CD8-positive, alpha-beta memory T cell (primary cell): ENCODE measurements at regions of chr11 and their contacts with region 1.

Region 1: GRCh38 chr11:10857709-10858438 is at the start of gene ZBED5:
- DNase-seq: peak; percentile 90 to 97 (median 96)
- H3K4me3 ChIP-seq: peak within 1 kb of the TSS; percentile 75
- H3K4me3 Mint-ChIP-seq: peak within 1 kb of the TSS; percentile 95 to 100 (median 99)
- H3K27ac ChIP-seq: peak within 1 kb of the TSS; percentile 89
- H3K27ac Mint-ChIP-seq: peak within 1 kb of the TSS; percentile 96 to 100 (median 99)
- H3K4me1 ChIP-seq: peaks cover 27% of the 10 kb centered on the region
- H3K4me1 Mint-ChIP-seq: peaks cover 31 to 58% (median 56%) of the 10 kb centered on the region in 3 donors
- H3K27me3 ChIP-seq: no peaks in the 10 kb centered on the region
- H3K27me3 Mint-ChIP-seq: no peaks in the 10 kb centered on the region
- total RNA-seq, gene ZBED5: 45.7 to 51.9 TPM

Region 2: GRCh38 chr11:10824888-10825287 is 33.0 kb before region 1 on chr11:
- CTCF ChIA-PET with region 1: no interaction called
- POLR2A ChIA-PET with region 1: no interaction called
- DNase-seq: no peak
- H3K4me3 ChIP-seq: no peak overlapping the region
- H3K4me3 Mint-ChIP-seq: no peak overlapping the region
- H3K27ac ChIP-seq: no peak overlapping the region
- H3K27ac Mint-ChIP-seq: peak overlapping the region in 2 of 8 donors; percentile 12 to 85
- H3K4me1 ChIP-seq: no peaks in the 10 kb centered on the region
- H3K4me1 Mint-ChIP-seq: peaks cover 0 to 4% (median 4%) of the 10 kb centered on the region in 3 donors
- H3K27me3 ChIP-seq: no peaks in the 10 kb centered on the region
- H3K27me3 Mint-ChIP-seq: peaks cover 0 to 2% of the 10 kb centered on the region in 2 donors

Region 3: DNA sequence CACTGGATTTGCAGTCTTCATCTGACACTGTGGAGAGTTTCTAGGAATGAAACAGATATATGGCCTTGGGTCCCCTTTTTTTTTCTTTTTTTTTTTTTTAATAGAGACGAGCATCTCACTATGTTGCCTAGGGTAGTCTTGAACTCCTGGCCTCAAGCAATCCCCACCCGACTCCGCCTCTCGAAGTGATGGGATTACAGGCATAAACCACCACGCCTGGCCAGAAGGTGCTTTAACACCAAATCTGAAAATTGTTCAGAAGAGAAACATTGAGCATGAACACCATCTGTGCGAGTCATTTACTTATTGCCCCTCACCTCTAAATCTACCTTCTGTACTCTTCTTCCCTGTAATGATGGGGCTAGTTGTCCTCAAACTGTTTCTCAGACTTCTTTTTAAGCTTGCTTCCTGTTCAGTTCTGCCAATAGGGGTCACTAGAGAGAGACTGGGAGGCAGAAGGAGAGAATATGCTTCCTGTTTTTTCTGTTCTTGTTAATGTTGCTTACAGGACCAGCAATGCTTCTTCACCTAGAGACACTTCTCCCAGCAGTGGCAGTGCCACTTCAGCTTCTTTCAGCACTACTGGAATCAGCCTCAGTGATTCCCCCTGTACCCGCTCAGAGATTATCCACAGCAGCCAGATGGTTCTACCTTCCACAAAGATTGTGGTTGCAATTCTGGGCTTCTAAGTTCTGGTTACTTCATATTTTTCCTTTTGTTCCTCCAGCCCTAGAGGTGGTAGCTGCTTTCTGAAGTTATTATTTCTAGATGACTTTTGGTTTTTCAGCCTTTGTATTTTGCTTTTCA is 20.7 kb after region 1 on chr11:
- CTCF ChIA-PET with region 1: interaction called, 11 read pairs
- POLR2A ChIA-PET with region 1: interaction called, 6 read pairs
- DNase-seq: peak in 2 of 5 donors; percentile 53 to 62
- H3K4me3 ChIP-seq: no peak overlapping the region
- H3K4me3 Mint-ChIP-seq: peak overlapping the region in 1 of 7 donors; percentile 7
- H3K27ac ChIP-seq: no peak overlapping the region
- H3K27ac Mint-ChIP-seq: peak overlapping the region in 3 of 8 donors; percentile 41 to 55 (median 44)
- H3K4me1 ChIP-seq: peaks cover 5% of the 10 kb centered on the region
- H3K4me1 Mint-ChIP-seq: peaks cover 9 to 12% (median 10%) of the 10 kb centered on the region in 3 donors
- H3K27me3 ChIP-seq: no peaks in the 10 kb centered on the region
- H3K27me3 Mint-ChIP-seq: peaks cover 0 to 4% of the 10 kb centered on the region in 2 donors

Region 4: GRCh38 chr11:10943968-10944367 is 86.1 kb after region 1 on chr11:
- CTCF ChIA-PET with region 1: no interaction called
- POLR2A ChIA-PET with region 1: no interaction called
- DNase-seq: no peak
- H3K4me3 ChIP-seq: no peak overlapping the region
- H3K4me3 Mint-ChIP-seq: no peak overlapping the region
- H3K27ac ChIP-seq: no peak overlapping the region
- H3K27ac Mint-ChIP-seq: no peak overlapping the region
- H3K4me1 ChIP-seq: no peaks in the 10 kb centered on the region
- H3K4me1 Mint-ChIP-seq: no peaks in the 10 kb centered on the region
- H3K27me3 ChIP-seq: no peaks in the 10 kb centered on the region
- H3K27me3 Mint-ChIP-seq: peaks cover 9 to 12% of the 10 kb centered on the region in 2 donors

Region 5: DNA sequence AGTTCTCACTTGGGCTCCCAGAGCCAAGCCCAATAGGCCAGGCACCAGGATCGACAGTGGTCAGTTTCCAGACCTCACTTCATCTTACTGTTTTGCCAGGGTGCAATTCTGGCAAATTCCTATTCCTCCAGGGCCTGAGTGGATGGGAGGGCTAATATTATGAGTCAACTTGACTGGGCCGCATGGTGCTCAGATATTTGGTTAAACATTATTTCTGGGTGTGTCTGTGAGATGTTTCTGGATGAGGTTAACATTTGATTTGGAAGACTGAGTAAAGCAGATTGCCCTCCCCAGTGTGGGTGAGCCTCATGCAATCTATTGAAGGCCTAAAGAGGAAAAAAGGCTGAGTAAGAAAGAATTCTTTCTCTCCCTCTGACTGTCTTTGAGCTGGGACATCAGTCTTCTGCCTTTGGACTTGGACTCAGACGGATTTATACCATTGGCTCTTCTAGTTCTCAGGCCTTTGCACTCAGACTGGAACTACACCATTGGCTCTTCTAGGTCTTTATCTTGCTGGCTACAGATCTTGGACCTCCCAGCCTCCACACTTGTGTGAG is 132.8 kb after region 1 on chr11:
- CTCF ChIA-PET with region 1: no interaction called
- POLR2A ChIA-PET with region 1: no interaction called
- DNase-seq: no peak
- H3K4me3 ChIP-seq: no peak overlapping the region
- H3K4me3 Mint-ChIP-seq: no peak overlapping the region
- H3K27ac ChIP-seq: no peak overlapping the region
- H3K27ac Mint-ChIP-seq: no peak overlapping the region
- H3K4me1 ChIP-seq: no peaks in the 10 kb centered on the region
- H3K4me1 Mint-ChIP-seq: no peaks in the 10 kb centered on the region
- H3K27me3 ChIP-seq: no peaks in the 10 kb centered on the region
- H3K27me3 Mint-ChIP-seq: peaks cover 6 to 37% of the 10 kb centered on the region in 2 donors